Transverse colon (tissue), 4 donors: ENCODE measurements at regions of chr5 and their contacts with region 1.

Region 1: DNA sequence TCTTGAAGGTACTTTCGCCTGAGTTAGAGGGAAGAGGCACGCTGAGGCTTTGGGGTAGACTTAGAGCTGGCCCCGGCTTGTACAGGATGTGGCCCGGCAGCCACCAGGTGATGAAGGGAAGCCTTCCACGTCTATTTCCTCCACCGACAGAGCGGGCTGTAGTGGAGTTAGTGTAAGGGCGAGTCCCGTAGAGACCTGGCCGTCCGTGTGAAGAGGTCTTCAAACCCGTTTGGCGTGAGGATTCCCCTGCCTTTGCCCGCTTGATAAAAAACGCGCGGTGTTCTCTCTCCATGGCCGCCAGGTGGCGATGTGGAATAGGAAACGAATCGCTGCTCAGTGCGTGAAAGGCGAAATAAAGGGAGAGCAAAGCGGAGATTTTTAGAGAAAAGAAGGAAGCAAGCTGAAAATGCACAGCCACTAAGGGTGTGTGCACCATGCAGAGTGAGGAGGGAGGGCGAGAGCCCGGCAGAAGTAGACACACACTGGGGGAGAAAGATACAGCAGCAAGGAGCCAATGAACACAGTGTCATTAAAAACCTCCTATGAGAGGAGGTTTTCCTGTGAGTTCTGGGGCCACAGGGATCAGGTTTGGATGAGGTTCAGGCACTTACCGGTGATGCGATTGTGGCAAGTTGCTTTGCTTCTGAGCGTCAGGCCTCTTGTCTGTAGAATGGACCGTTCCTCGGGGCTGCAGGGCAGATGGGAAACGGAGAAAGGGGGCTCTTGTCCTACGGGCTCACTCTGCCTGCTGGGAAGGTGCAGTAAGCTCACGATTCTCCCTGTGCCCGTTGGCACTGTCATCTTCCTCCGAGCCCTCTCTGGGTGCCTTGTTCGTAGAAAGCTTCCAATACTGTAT is 34.2 kb downstream of the STC2 start:
- DNase-seq: peak; percentile 69
- H3K4me3 ChIP-seq: no peak overlapping the region
- H3K27ac ChIP-seq: no peak overlapping the region
- H3K4me1 ChIP-seq: peaks cover 3 to 8% (median 5%) of the 10 kb centered on the region in 4 donors
- H3K27me3 ChIP-seq: peaks cover 61% of the 10 kb centered on the region
- CTCF ChIP-seq: peak; percentile 84 to 90 (median 87)
- EP300 ChIP-seq: no peak
- POLR2A ChIP-seq: no peak

Region 2: DNA sequence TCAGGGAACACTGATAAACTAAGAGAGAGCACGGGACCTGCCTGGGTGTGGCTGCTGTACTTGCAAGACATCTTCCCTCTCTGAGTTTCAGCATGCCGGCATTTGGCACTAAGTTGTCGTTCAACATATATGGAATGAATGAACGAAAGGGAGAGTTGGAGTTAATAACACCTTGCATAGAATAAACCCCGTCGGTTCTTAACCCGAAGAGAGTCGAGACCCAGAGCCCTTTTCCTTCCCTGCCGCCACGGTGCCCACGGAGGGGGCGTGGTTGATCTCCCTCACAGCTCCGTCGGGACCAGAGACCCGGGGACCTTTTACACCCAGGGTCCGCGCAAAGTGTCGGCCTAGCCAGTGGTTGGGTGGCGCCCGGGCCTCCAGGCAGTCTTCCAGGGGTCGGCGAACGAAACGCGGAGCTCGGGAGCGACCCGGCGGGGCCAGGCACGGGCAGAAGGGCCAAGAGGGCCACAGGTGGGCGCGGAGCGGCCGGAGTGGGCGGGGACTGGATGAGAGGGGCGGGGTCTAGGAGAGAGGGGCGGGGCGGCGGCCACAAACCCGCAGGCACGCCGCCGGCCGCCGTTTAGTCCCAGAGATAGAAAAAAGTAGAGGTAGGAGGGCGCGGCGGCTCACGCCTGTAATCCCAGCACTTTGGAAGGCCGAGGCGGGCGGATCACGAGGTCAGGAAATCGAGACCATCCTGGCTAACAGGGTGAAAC is 335.6 kb before region 1 on chr5:
- in situ Hi-C with region 1: loop called in 1 of 4 experiments (anchors 25 kb)
- intact Hi-C with region 1: no loop called
- DNase-seq: peak; percentile 78
- H3K4me3 ChIP-seq: peak overlapping the region; percentile 53 to 99 (median 67)
- H3K27ac ChIP-seq: peak overlapping the region; percentile 84 to 90 (median 86)
- H3K4me1 ChIP-seq: peaks cover 7 to 19% (median 14%) of the 10 kb centered on the region in 4 donors
- H3K27me3 ChIP-seq: no peaks in the 10 kb centered on the region
- CTCF ChIP-seq: no peak
- EP300 ChIP-seq: no peak
- POLR2A ChIP-seq: no peak

Region 3: DNA sequence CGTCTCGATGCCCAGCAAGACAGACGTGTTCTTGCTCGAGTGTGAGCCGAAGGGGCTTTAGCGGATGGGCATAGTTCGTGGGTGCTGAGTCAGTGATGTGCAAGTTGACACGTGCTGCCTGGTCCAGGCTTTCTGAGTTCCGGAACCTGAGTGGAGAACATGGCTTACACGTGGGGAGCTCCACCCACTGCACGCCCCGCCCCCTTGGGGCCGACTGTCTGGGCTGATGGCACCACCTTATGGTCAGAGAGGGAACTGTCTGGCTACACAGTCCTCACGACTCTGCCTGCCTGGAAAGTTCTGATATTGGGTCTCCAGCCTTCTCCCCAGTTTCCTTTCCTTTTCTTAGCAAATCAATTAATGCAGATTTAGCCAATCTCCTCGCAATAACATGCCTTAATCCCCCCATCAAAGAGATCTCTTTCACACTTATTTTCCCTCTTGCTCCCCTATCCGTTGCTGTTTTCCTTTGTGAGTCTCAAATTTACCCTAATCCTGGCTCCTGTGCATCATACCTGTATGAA is 38.0 kb after region 1 on chr5:
- in situ Hi-C with region 1: no loop called
- intact Hi-C with region 1: loop called (anchors 1 kb)
- DNase-seq: peak; percentile 79
- H3K4me3 ChIP-seq: no peak overlapping the region
- H3K27ac ChIP-seq: no peak overlapping the region
- H3K4me1 ChIP-seq: peaks cover 18 to 29% (median 29%) of the 10 kb centered on the region in 4 donors
- H3K27me3 ChIP-seq: peaks cover 86% of the 10 kb centered on the region
- CTCF ChIP-seq: peak; percentile 75 to 94 (median 85)
- EP300 ChIP-seq: no peak
- POLR2A ChIP-seq: no peak

Region 4: DNA sequence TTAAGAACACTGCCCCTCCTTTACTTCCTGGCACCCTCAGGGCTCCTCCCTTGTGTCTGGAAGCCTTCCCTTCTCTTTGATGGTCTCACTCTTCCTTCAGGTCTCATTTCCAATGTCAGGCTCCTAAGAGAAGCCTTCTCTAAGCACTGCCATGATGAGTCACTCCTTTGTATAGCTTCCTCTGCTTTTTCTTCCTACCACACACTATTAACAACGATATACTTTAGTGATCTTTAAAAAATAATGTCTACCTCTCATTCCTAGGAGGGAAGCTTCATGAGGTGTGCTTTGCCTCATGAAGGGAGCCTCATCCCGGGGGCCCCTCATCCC is 242.2 kb after region 1 on chr5:
- in situ Hi-C with region 1: no loop called
- intact Hi-C with region 1: no loop called
- DNase-seq: no peak
- H3K4me3 ChIP-seq: no peak overlapping the region
- H3K27ac ChIP-seq: no peak overlapping the region
- H3K4me1 ChIP-seq: no peaks in the 10 kb centered on the region
- H3K27me3 ChIP-seq: no peaks in the 10 kb centered on the region
- CTCF ChIP-seq: no peak
- EP300 ChIP-seq: no peak
- POLR2A ChIP-seq: no peak

Region 5: GRCh38 chr5:173567574-173567973 is 273.5 kb after region 1 on chr5:
- in situ Hi-C with region 1: loop called in 2 of 4 experiments (anchors 10 kb)
- intact Hi-C with region 1: loop called (anchors 10 kb)
- DNase-seq: no peak
- H3K4me3 ChIP-seq: no peak overlapping the region
- H3K27ac ChIP-seq: no peak overlapping the region
- H3K4me1 ChIP-seq: peaks cover 0 to under 1% (median under 1%) of the 10 kb centered on the region in 4 donors
- H3K27me3 ChIP-seq: peaks cover 5% of the 10 kb centered on the region
- CTCF ChIP-seq: no peak
- EP300 ChIP-seq: no peak
- POLR2A ChIP-seq: no peak

Region 6: GRCh38 chr5:173573126-173573960 is 279.3 kb after region 1 on chr5:
- in situ Hi-C with region 1: loop called in 2 of 4 experiments (anchors 10 kb)
- intact Hi-C with region 1: loop called (anchors 10 kb)
- DNase-seq: peak; percentile 70
- H3K4me3 ChIP-seq: no peak overlapping the region
- H3K27ac ChIP-seq: no peak overlapping the region
- H3K4me1 ChIP-seq: peaks cover 0 to 7% (median 2%) of the 10 kb centered on the region in 4 donors
- H3K27me3 ChIP-seq: peaks cover 8% of the 10 kb centered on the region
- CTCF ChIP-seq: peak; percentile 80 to 98 (median 97)
- EP300 ChIP-seq: no peak
- POLR2A ChIP-seq: no peak

Region 7: DNA sequence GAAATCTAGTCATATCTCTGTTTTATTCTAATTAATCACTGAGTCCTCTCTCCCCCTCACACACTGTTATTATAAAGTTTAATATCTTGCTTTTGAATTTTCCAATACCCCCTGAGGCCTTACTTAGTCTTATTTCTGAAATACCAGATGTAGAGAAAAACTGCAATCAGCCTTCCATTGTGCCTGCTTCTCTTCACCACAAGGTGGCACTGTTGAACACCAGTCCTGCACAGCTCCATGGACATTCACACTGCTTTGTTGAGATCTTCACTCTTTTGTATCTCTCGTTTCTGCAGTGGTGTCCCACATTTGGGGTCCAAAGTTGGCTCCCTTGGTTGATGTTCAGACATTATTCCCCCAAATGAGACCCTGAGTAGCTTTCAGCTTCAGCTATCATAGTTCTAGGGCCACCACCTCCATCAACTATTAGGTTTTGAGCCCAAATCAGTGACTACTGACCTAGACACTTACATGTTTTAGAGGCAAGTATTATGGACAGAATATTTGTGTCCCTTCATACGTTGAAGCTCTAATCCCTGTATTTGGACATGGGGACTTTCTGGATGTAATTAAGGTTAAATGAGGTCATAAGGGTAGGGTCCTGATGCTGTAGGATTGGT is 298.1 kb after region 1 on chr5:
- in situ Hi-C with region 1: no loop called
- intact Hi-C with region 1: no loop called
- DNase-seq: no peak
- H3K4me3 ChIP-seq: no peak overlapping the region
- H3K27ac ChIP-seq: no peak overlapping the region
- H3K4me1 ChIP-seq: no peaks in the 10 kb centered on the region
- H3K27me3 ChIP-seq: no peaks in the 10 kb centered on the region
- CTCF ChIP-seq: peak in 4 of 5 experiments; percentile 32 to 44 (median 35)
- EP300 ChIP-seq: no peak
- POLR2A ChIP-seq: no peak

Region 8: GRCh38 chr5:173972925-173973615 is 679.0 kb after region 1 on chr5:
- in situ Hi-C with region 1: loop called in 1 of 4 experiments (anchors 25 kb)
- intact Hi-C with region 1: no loop called
- DNase-seq: peak; percentile 86
- H3K4me3 ChIP-seq: peak overlapping the region; percentile 10 to 48 (median 26)
- H3K27ac ChIP-seq: peak overlapping the region in 1 of 4 donors; percentile 19
- H3K4me1 ChIP-seq: peaks cover 4 to 10% (median 5%) of the 10 kb centered on the region in 4 donors
- H3K27me3 ChIP-seq: no peaks in the 10 kb centered on the region
- CTCF ChIP-seq: peak; percentile 88 to 95 (median 89)
- EP300 ChIP-seq: no peak
- POLR2A ChIP-seq: no peak